ENCODE measurements at regions of chr2 and their contacts with region 1.

Region 1: GRCh38 chr2:200578778-200579177 is 7.0 kb upstream of the AOX1 start:
- DNase-seq: peak in 1 of 2 experiments; percentile 6
- H3K4me3 ChIP-seq: no peak overlapping the region
- H3K27ac ChIP-seq: no peak overlapping the region
- H3K4me1 ChIP-seq: no peaks in the 10 kb centered on the region
- H3K27me3 ChIP-seq: no peaks in the 10 kb centered on the region
- CTCF ChIP-seq: peak; percentile 76

Region 2: GRCh38 chr2:199973703-199974102 is 605.1 kb before region 1 on chr2:
- CTCF ChIA-PET with region 1: no interaction called
- POLR2A ChIA-PET with region 1: no interaction called
- intact Hi-C with region 1: loop called (anchors 5 kb)
- DNase-seq: no peak
- H3K4me3 ChIP-seq: no peak overlapping the region
- H3K27ac ChIP-seq: peak overlapping the region; percentile 91; the same call in 1 of the 2 replicates
- H3K4me1 ChIP-seq: peaks cover 37% of the 10 kb centered on the region
- H3K27me3 ChIP-seq: no peaks in the 10 kb centered on the region
- CTCF ChIP-seq: peak; percentile 83

Region 3: DNA sequence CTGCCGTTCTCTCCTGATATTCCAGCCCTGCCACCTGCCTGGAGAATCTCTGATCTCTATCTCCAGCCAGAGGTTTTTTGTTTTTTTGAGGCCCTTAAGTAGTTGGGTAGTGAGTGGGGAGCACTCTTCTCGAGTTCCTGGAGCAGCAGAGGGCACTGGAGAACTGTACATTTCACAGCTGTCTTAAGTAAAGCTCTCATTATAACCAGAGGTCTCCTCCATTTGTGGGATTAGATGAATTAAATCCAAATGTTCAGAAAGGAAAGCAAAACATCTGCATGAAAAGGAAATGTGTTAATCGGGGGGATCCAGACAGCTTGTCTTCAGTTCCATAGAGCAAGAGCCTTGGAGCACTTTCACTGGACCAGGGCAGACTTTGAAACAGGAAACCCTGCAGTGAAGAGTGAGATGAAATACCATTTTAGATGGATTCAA is 39.8 kb after region 1 on chr2:
- CTCF ChIA-PET with region 1: no interaction called
- POLR2A ChIA-PET with region 1: no interaction called
- intact Hi-C with region 1: loop called (anchors 2 kb)
- DNase-seq: peak in 1 of 2 experiments; percentile 14
- H3K4me3 ChIP-seq: no peak overlapping the region
- H3K27ac ChIP-seq: no peak overlapping the region
- H3K4me1 ChIP-seq: peaks cover 25% of the 10 kb centered on the region
- H3K27me3 ChIP-seq: no peaks in the 10 kb centered on the region
- CTCF ChIP-seq: peak; percentile 30; the same call in 1 of the 2 replicates

Region 4: DNA sequence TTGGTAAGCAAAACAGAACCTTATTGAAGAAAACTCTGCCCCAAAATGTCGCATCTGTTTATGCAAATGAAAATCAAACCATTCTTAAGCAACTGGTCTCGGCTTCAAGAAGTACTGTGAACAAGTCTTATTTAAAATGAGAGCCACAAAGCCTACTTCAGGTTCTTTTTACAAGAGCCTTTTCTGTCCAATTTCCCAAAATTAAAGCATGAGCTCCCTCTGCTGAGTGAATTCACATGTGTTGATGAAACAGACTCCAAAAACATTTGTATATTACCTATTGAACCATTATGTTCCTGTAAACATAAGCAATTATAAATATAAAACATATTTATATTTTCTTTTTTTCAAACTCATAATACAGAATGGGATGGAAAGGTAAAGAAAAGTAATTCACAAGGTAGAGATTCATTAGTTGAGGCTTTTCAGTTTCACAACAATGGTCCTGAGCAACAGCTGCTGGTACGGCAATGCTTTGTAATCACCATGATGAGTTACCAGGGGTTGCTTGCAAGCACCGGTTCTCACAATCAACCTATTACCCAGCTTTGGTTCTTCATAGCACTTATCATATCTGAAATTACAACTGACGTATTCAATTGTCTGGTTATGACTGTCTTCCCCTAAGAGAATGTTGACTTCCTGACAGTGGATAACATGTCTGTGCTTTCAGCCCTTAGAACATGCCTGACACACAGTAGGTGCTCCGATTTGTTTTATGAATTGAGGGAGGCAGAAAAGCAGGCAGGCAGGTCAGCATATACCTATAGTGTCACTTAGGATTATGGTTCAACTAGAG is 124.5 kb after region 1 on chr2:
- CTCF ChIA-PET with region 1: no interaction called
- POLR2A ChIA-PET with region 1: no interaction called
- intact Hi-C with region 1: loop called (anchors 1 kb)
- DNase-seq: peak; percentile 27 to 65
- H3K4me3 ChIP-seq: no peak overlapping the region
- H3K27ac ChIP-seq: no peak overlapping the region
- H3K4me1 ChIP-seq: peaks cover 5% of the 10 kb centered on the region; the same call in 1 of the 2 replicates
- H3K27me3 ChIP-seq: no peaks in the 10 kb centered on the region
- CTCF ChIP-seq: peak; percentile 81

Region 5: GRCh38 chr2:200929334-200930249 is 350.8 kb after region 1 on chr2:
- CTCF ChIA-PET with region 1: interaction called, 15 read pairs
- POLR2A ChIA-PET with region 1: no interaction called
- intact Hi-C with region 1: no loop called
- DNase-seq: no peak
- H3K4me3 ChIP-seq: no peak overlapping the region
- H3K27ac ChIP-seq: no peak overlapping the region
- H3K4me1 ChIP-seq: no peaks in the 10 kb centered on the region
- H3K27me3 ChIP-seq: no peaks in the 10 kb centered on the region
- CTCF ChIP-seq: no peak

Region 6: GRCh38 chr2:201171259-201171814 is 592.6 kb after region 1 on chr2:
- CTCF ChIA-PET with region 1: no interaction called
- POLR2A ChIA-PET with region 1: no interaction called
- intact Hi-C with region 1: loop called (anchors 5 kb)
- DNase-seq: no peak
- H3K4me3 ChIP-seq: no peak overlapping the region
- H3K27ac ChIP-seq: no peak overlapping the region
- H3K4me1 ChIP-seq: no peaks in the 10 kb centered on the region
- H3K27me3 ChIP-seq: no peaks in the 10 kb centered on the region
- CTCF ChIP-seq: no peak

Measured in PC-9 (cell line).